ENCODE measurements at regions of chr12 and their contacts with region 1.

Region 1: DNA sequence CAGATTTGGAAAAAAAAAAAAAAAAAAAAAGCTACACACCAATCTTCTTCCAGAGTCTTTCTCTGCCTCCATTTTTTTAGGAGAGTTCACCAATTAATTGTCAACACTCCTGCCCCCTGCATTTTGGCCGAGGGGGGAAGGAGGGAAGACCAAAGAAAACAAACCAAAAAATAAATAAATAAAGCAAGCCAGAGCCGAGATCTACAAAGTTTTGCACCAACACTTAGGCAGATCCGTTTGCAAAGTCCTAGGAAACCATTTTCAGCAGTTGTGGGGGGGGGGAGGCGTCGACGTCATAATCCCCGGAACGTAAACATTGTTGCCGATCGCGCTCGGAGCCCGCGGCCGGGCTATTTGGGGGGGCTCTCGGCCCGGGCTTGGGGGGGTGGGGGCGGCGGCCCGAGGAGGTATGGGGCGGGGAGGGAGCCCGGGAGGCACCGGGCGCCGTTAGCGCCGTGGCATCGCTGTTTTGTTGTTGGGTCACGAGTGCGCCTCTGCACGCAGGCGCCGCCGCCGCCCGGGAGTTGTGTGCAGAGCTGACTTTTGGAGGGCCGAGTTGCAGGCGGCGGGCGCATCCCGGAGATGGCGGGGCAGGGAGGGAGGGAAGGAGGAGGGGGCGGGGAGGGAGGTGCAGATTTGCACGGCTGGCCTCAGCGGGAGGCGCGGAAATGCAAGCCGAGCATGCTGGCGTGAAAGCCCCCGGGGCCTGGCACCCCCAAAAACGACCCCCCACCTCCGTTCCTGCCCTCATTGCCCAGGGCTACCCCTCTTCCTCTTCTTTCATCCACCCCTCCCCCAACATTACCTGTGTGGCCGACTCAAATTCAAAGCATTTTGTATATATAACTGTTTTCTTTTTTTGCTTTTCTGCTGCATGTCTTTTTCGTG is 598 bp downstream of the KDM2B start:
- DNase-seq: peak; percentile 72 to 89 (median 73)
- H3K4me3 ChIP-seq: peak overlapping the region; percentile 97
- H3K4me3 Mint-ChIP-seq: peak overlapping the region; percentile 95 to 99 (median 98)
- H3K27ac ChIP-seq: peak overlapping the region; percentile 93
- H3K27ac Mint-ChIP-seq: peak overlapping the region; percentile 97 to 100 (median 99)
- H3K4me1 ChIP-seq: peaks cover 41% of the 10 kb centered on the region
- H3K4me1 Mint-ChIP-seq: peaks cover 41 to 73% (median 48%) of the 10 kb centered on the region in 3 donors
- H3K27me3 ChIP-seq: no peaks in the 10 kb centered on the region
- H3K27me3 Mint-ChIP-seq: no peaks in the 10 kb centered on the region

Region 2: GRCh38 chr12:121550974-121551634 is 29.1 kb before region 1 on chr12:
- CTCF ChIA-PET with region 1: interaction called, 21 read pairs
- POLR2A ChIA-PET with region 1: no interaction called
- DNase-seq: no peak
- H3K4me3 ChIP-seq: no peak overlapping the region
- H3K4me3 Mint-ChIP-seq: no peak overlapping the region
- H3K27ac ChIP-seq: no peak overlapping the region
- H3K27ac Mint-ChIP-seq: peak overlapping the region; percentile 10 to 98 (median 96)
- H3K4me1 ChIP-seq: peaks cover 13% of the 10 kb centered on the region
- H3K4me1 Mint-ChIP-seq: peaks cover 9 to 12% (median 12%) of the 10 kb centered on the region in 3 donors
- H3K27me3 ChIP-seq: no peaks in the 10 kb centered on the region
- H3K27me3 Mint-ChIP-seq: no peaks in the 10 kb centered on the region

Region 3: GRCh38 chr12:121590476-121591143 is 10.4 kb after region 1 on chr12:
- CTCF ChIA-PET with region 1: interaction called, 6 read pairs
- POLR2A ChIA-PET with region 1: interaction called, 93 read pairs
- DNase-seq: peak; percentile 47 to 87 (median 84)
- H3K4me3 ChIP-seq: peak overlapping the region; percentile 80
- H3K4me3 Mint-ChIP-seq: peak overlapping the region; percentile 88 to 95 (median 90)
- H3K27ac ChIP-seq: peak overlapping the region; percentile 98
- H3K27ac Mint-ChIP-seq: peak overlapping the region; percentile 99 to 100 (median 100)
- H3K4me1 ChIP-seq: peaks cover 33% of the 10 kb centered on the region
- H3K4me1 Mint-ChIP-seq: peaks cover 36 to 46% (median 43%) of the 10 kb centered on the region in 3 donors
- H3K27me3 ChIP-seq: no peaks in the 10 kb centered on the region
- H3K27me3 Mint-ChIP-seq: peaks cover 0 to 10% of the 10 kb centered on the region in 2 donors

Region 4: DNA sequence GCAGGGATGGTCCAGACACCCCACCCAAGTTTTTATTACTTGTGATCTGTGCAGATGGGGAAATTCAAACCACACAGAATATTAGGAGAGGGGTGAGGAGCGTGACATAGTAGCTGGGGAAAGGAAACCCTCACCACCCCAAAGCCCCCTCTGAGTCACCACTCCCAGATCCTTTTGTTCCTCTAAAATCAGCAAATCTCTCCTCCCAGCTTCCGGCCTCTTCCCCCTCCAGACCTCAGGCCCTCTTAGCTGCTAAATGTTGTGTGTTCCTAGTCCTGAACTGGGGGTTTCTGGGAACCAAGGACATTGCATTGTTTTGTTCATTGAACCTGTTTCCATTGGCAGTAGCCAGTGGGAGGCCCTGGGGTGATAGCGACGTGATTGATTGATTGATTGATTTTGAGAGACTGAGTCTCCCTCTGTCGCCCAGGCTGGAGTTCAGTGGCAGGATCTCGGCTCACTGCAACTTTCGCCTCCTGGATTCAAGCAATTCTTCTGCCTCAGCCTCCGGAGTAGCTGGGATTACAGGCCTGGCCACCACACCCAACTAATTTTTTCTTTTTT is 40.2 kb after region 1 on chr12:
- CTCF ChIA-PET with region 1: interaction called, 69 read pairs
- POLR2A ChIA-PET with region 1: interaction called, 23 read pairs
- DNase-seq: no peak
- H3K4me3 ChIP-seq: no peak overlapping the region
- H3K4me3 Mint-ChIP-seq: no peak overlapping the region
- H3K27ac ChIP-seq: no peak overlapping the region
- H3K27ac Mint-ChIP-seq: peak overlapping the region in 1 of 8 donors; percentile 18
- H3K4me1 ChIP-seq: peaks cover 7% of the 10 kb centered on the region
- H3K4me1 Mint-ChIP-seq: peaks cover 9 to 11% (median 9%) of the 10 kb centered on the region in 3 donors
- H3K27me3 ChIP-seq: no peaks in the 10 kb centered on the region
- H3K27me3 Mint-ChIP-seq: no peaks in the 10 kb centered on the region

Region 5: GRCh38 chr12:121637231-121637914 is 57.1 kb after region 1 on chr12:
- CTCF ChIA-PET with region 1: interaction called, 12 read pairs
- POLR2A ChIA-PET with region 1: interaction called, 4 read pairs
- DNase-seq: peak; percentile 37 to 72 (median 61)
- H3K4me3 ChIP-seq: peak overlapping the region; percentile 53
- H3K4me3 Mint-ChIP-seq: peak overlapping the region; percentile 39 to 88 (median 74)
- H3K27ac ChIP-seq: peak overlapping the region; percentile 69
- H3K27ac Mint-ChIP-seq: peak overlapping the region; percentile 85 to 96 (median 92)
- H3K4me1 ChIP-seq: peaks cover 54% of the 10 kb centered on the region
- H3K4me1 Mint-ChIP-seq: peaks cover 41 to 65% (median 46%) of the 10 kb centered on the region in 3 donors
- H3K27me3 ChIP-seq: no peaks in the 10 kb centered on the region
- H3K27me3 Mint-ChIP-seq: no peaks in the 10 kb centered on the region

Region 6: GRCh38 chr12:121786441-121786825 is 206.2 kb after region 1 on chr12:
- CTCF ChIA-PET with region 1: no interaction called
- POLR2A ChIA-PET with region 1: interaction called, 11 read pairs
- DNase-seq: peak; percentile 49 to 74 (median 62)
- H3K4me3 ChIP-seq: peak overlapping the region; percentile 47
- H3K4me3 Mint-ChIP-seq: peak overlapping the region; percentile 67 to 90 (median 88)
- H3K27ac ChIP-seq: peak overlapping the region; percentile 97
- H3K27ac Mint-ChIP-seq: peak overlapping the region; percentile 99 to 100 (median 100)
- H3K4me1 ChIP-seq: peaks cover 91% of the 10 kb centered on the region
- H3K4me1 Mint-ChIP-seq: peaks cover 83 to 96% (median 94%) of the 10 kb centered on the region in 3 donors
- H3K27me3 ChIP-seq: no peaks in the 10 kb centered on the region
- H3K27me3 Mint-ChIP-seq: peaks cover 0 to 4% of the 10 kb centered on the region in 2 donors

Region 7: GRCh38 chr12:121933522-121934308 is 353.5 kb after region 1 on chr12:
- CTCF ChIA-PET with region 1: no interaction called
- POLR2A ChIA-PET with region 1: no interaction called
- DNase-seq: no peak
- H3K4me3 ChIP-seq: no peak overlapping the region
- H3K4me3 Mint-ChIP-seq: no peak overlapping the region
- H3K27ac ChIP-seq: peak overlapping the region; percentile 82
- H3K27ac Mint-ChIP-seq: no peak overlapping the region
- H3K4me1 ChIP-seq: no peaks in the 10 kb centered on the region
- H3K4me1 Mint-ChIP-seq: peaks cover 0 to 6% (median 4%) of the 10 kb centered on the region in 3 donors
- H3K27me3 ChIP-seq: no peaks in the 10 kb centered on the region
- H3K27me3 Mint-ChIP-seq: peaks cover 0 to 4% of the 10 kb centered on the region in 2 donors